H1 (cell line): ENCODE measurements at regions of chr2 and their contacts with region 1.

Region 1: DNA sequence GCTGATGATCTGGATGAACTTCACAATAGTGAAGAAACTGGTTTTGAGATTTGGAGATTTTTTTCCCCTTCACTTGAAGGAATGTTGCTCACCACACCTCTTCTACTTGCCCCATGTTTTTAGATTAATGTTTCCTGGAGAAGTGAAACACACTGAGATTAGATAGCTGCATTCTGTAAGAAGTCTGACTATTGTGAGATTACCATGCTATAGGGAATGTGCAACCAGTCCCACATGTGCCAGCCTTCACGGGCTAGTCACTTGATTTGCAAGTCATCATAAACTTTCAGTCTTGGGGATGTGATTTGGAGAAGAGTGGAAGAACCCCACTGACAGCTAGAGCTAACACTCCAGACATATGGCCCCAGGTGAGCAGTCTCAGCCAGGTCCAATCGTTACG is 7.4 kb upstream of the CCNYL1 start:
- DNase-seq: no peak
- H3K4me3 ChIP-seq: no peak overlapping the region
- H3K27ac ChIP-seq: no peak overlapping the region
- H3K4me1 ChIP-seq: no peaks in the 10 kb centered on the region; a peak in 1 of 7 replicates
- H3K27me3 ChIP-seq: no peaks in the 10 kb centered on the region
- CTCF ChIP-seq: no peak
- EP300 ChIP-seq: no peak
- POLR2A ChIP-seq: no peak
- RAD21 ChIP-seq: no peak

Region 2: GRCh38 chr2:207504513-207505171 is 199.4 kb before region 1 on chr2:
- CTCF ChIA-PET with region 1: no interaction called
- POLR2A ChIA-PET with region 1: no interaction called
- DNase-seq: no peak
- H3K4me3 ChIP-seq: peak overlapping the region in 1 of 4 experiments; percentile 23; a peak in 1 of 8 replicates
- H3K27ac ChIP-seq: peak overlapping the region; percentile 31; the same call in 1 of the 2 replicates
- H3K4me1 ChIP-seq: peaks cover 10 to 14% (median 11%) of the 10 kb centered on the region in 4 experiments
- H3K27me3 ChIP-seq: no peaks in the 10 kb centered on the region; a peak in 1 of 7 replicates
- CTCF ChIP-seq: no peak
- EP300 ChIP-seq: no peak
- POLR2A ChIP-seq: no peak
- RAD21 ChIP-seq: peak in 1 of 2 experiments; percentile 2; a peak in 1 of 4 replicates

Region 3: GRCh38 chr2:207643892-207644291 is 60.2 kb before region 1 on chr2:
- CTCF ChIA-PET with region 1: no interaction called
- POLR2A ChIA-PET with region 1: no interaction called
- DNase-seq: no peak
- H3K4me3 ChIP-seq: no peak overlapping the region
- H3K27ac ChIP-seq: no peak overlapping the region
- H3K4me1 ChIP-seq: no peaks in the 10 kb centered on the region
- H3K27me3 ChIP-seq: peaks cover 0 to 1% (median 0%) of the 10 kb centered on the region in 4 experiments; a peak in 1 of 7 replicates
- CTCF ChIP-seq: no peak
- EP300 ChIP-seq: no peak
- POLR2A ChIP-seq: no peak
- RAD21 ChIP-seq: no peak

Region 4: GRCh38 chr2:207720517-207721208 is 16.6 kb after region 1 on chr2:
- CTCF ChIA-PET with region 1: interaction called, 12 read pairs
- POLR2A ChIA-PET with region 1: interaction called, 5 read pairs
- DNase-seq: no peak
- H3K4me3 ChIP-seq: no peak overlapping the region
- H3K27ac ChIP-seq: no peak overlapping the region
- H3K4me1 ChIP-seq: 0 out of 7 replicates have a peak, but pooled peaks cover 0 to 3% (median 0%) of the 10 kb centered on the region in 4 experiments
- H3K27me3 ChIP-seq: no peaks in the 10 kb centered on the region
- CTCF ChIP-seq: no peak
- EP300 ChIP-seq: no peak
- POLR2A ChIP-seq: no peak
- RAD21 ChIP-seq: no peak